Ovary (tissue), 10 donors: ENCODE measurements at regions of chr7 and their contacts with region 1.

Region 1: DNA sequence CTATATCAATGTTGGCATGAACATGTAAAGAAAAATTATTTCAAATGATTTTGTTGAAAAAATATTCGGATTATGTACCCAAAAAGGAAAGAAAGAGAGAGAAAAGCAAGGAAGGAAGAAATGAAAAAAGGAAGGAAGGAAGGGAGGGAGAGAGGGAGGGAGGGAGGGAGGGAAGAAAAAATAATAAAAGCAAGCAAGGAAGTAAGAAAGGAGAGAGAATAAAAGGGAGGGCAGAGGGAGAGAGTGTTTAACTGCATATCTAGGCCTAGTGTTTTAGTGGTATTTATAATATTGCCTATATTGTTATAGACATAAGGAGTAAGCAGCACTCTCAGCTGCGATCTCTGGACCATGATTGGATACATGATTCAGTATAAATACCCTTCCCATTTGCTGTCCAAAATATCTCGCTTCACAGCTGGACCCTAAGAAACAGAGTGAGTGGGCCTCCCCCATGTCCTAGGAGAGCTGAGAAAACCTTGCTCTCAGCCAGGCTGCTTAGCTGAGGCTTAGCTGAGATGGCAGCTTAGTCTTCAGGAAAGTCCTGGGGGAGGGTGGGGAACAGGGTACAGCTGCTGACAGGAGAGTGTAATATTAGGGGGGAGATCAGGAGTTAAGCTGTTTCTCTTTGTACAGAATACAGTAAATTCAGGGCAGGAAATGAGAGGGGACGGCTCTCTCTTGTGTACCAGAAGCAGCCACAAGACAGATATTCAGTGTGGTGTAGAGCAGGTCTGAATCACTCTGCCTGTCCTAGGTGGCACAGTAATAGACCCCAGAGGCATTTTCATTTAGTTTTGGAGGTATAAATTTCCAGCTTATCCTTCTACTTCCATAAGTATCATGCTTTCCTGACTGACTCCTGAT is 66.8 kb upstream of the TARP start:
- DNase-seq: no peak
- H3K4me3 ChIP-seq: no peak overlapping the region
- H3K27ac ChIP-seq: no peak overlapping the region
- H3K4me1 ChIP-seq: no peaks in the 10 kb centered on the region
- H3K27me3 ChIP-seq: no peaks in the 10 kb centered on the region
- CTCF ChIP-seq: no peak
- EP300 ChIP-seq: no peak
- POLR2A ChIP-seq: no peak

Region 2: GRCh38 chr7:38086857-38087256 is 253.3 kb before region 1 on chr7:
- intact Hi-C with region 1: no loop called
- DNase-seq: no peak
- H3K4me3 ChIP-seq: no peak overlapping the region
- H3K27ac ChIP-seq: no peak overlapping the region
- H3K4me1 ChIP-seq: no peaks in the 10 kb centered on the region
- H3K27me3 ChIP-seq: no peaks in the 10 kb centered on the region
- CTCF ChIP-seq: no peak
- EP300 ChIP-seq: no peak
- POLR2A ChIP-seq: no peak

Region 3: DNA sequence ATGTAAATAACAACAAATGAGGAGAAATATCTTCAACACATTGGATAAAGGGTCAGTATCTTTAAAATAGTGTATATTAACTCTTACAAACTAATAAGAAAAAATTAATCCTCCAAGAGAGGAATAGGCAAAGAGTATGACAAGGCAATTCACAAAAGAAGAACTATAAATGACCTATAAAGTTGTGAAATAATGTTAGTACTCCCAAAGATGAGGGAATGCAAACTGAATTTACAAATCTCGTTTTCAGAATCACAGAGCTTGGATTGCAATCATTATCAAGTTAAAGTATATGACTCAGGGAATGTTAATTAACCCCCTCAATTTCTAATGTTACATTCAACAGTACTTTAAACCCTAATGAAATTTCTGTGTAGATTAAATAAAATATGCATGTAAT is 20.6 kb after region 1 on chr7:
- intact Hi-C with region 1: loop called in 1 of 4 experiments (anchors 1 kb)
- DNase-seq: no peak
- H3K4me3 ChIP-seq: no peak overlapping the region
- H3K27ac ChIP-seq: no peak overlapping the region
- H3K4me1 ChIP-seq: no peaks in the 10 kb centered on the region
- H3K27me3 ChIP-seq: no peaks in the 10 kb centered on the region
- CTCF ChIP-seq: no peak
- EP300 ChIP-seq: no peak
- POLR2A ChIP-seq: no peak